Naive thymus-derived CD4-positive, alpha-beta T cell (primary cell): ENCODE measurements at regions of chr1 and their contacts with region 1.

Region 1: GRCh38 chr1:227787513-227788270 is 27.8 kb upstream of the PRSS38 start:
- DNase-seq: peak; percentile 76 to 94 (median 90)
- ATAC-seq: peak; percentile 96
- H3K4me3 ChIP-seq: peak overlapping the region; percentile 79
- H3K4me3 Mint-ChIP-seq: peak overlapping the region; percentile 81 to 89 (median 86)
- H3K27ac ChIP-seq: peak overlapping the region; percentile 23
- H3K27ac Mint-ChIP-seq: peak overlapping the region in 8 of 9 donors; percentile 23 to 84 (median 75)
- H3K4me1 ChIP-seq: peaks cover 5 to 6% of the 10 kb centered on the region in 2 donors
- H3K4me1 Mint-ChIP-seq: peaks cover 7 to 18% (median 11%) of the 10 kb centered on the region in 7 donors
- H3K27me3 ChIP-seq: no peaks in the 10 kb centered on the region
- H3K27me3 Mint-ChIP-seq: peaks cover 0 to 4% (median 0%) of the 10 kb centered on the region in 5 donors

Region 2: GRCh38 chr1:226009650-226010044 is 1778.0 kb before region 1 on chr1:
- CTCF ChIA-PET with region 1: no interaction called
- POLR2A ChIA-PET with region 1: no interaction called
- intact Hi-C with region 1: loop called in 1 of 2 experiments (anchors 5 kb)
- DNase-seq: no peak
- ATAC-seq: no peak
- H3K4me3 ChIP-seq: no peak overlapping the region
- H3K4me3 Mint-ChIP-seq: no peak overlapping the region
- H3K27ac ChIP-seq: no peak overlapping the region
- H3K27ac Mint-ChIP-seq: peak overlapping the region in 1 of 9 donors; percentile 23
- H3K4me1 ChIP-seq: peaks cover 0 to 2% of the 10 kb centered on the region in 2 donors
- H3K4me1 Mint-ChIP-seq: peaks cover 0 to 12% (median 3%) of the 10 kb centered on the region in 7 donors
- H3K27me3 ChIP-seq: no peaks in the 10 kb centered on the region
- H3K27me3 Mint-ChIP-seq: peaks cover 0 to 12% (median 0%) of the 10 kb centered on the region in 5 donors

Region 3: GRCh38 chr1:227728059-227728891 is 59.4 kb before region 1 on chr1:
- CTCF ChIA-PET with region 1: no interaction called
- POLR2A ChIA-PET with region 1: interaction called, 3 read pairs
- intact Hi-C with region 1: loop called (anchors 1 kb)
- DNase-seq: peak in 7 of 9 donors; percentile 23 to 63 (median 39)
- ATAC-seq: peak; percentile 69
- H3K4me3 ChIP-seq: peak overlapping the region; percentile 59
- H3K4me3 Mint-ChIP-seq: peak overlapping the region; percentile 78 to 89 (median 87)
- H3K27ac ChIP-seq: peak overlapping the region; percentile 69
- H3K27ac Mint-ChIP-seq: peak overlapping the region; percentile 43 to 90 (median 74)
- H3K4me1 ChIP-seq: peaks cover 0 to 10% of the 10 kb centered on the region in 2 donors
- H3K4me1 Mint-ChIP-seq: peaks cover 6 to 29% (median 20%) of the 10 kb centered on the region in 7 donors
- H3K27me3 ChIP-seq: no peaks in the 10 kb centered on the region
- H3K27me3 Mint-ChIP-seq: peaks cover 0 to 11% (median 8%) of the 10 kb centered on the region in 5 donors

Region 4: GRCh38 chr1:227828786-227829185 is 41.1 kb after region 1 on chr1:
- CTCF ChIA-PET with region 1: no interaction called
- POLR2A ChIA-PET with region 1: no interaction called
- intact Hi-C with region 1: no loop called
- DNase-seq: no peak
- ATAC-seq: no peak
- H3K4me3 ChIP-seq: no peak overlapping the region
- H3K4me3 Mint-ChIP-seq: no peak overlapping the region
- H3K27ac ChIP-seq: no peak overlapping the region
- H3K27ac Mint-ChIP-seq: no peak overlapping the region
- H3K4me1 ChIP-seq: peaks cover 0 to 12% of the 10 kb centered on the region in 2 donors
- H3K4me1 Mint-ChIP-seq: peaks cover 0 to 20% (median 9%) of the 10 kb centered on the region in 7 donors
- H3K27me3 ChIP-seq: no peaks in the 10 kb centered on the region
- H3K27me3 Mint-ChIP-seq: peaks cover 0 to 29% (median 6%) of the 10 kb centered on the region in 5 donors

Region 5: GRCh38 chr1:227946624-227947385 is 159.1 kb after region 1 on chr1:
- CTCF ChIA-PET with region 1: no interaction called
- POLR2A ChIA-PET with region 1: no interaction called
- intact Hi-C with region 1: loop called in 1 of 2 experiments (anchors 1 kb)
- DNase-seq: peak in 8 of 9 donors; percentile 24 to 70 (median 60)
- ATAC-seq: peak; percentile 63
- H3K4me3 ChIP-seq: peak overlapping the region; percentile 17
- H3K4me3 Mint-ChIP-seq: peak overlapping the region; percentile 65 to 87 (median 74)
- H3K27ac ChIP-seq: no peak overlapping the region
- H3K27ac Mint-ChIP-seq: peak overlapping the region in 1 of 9 donors; percentile 23
- H3K4me1 ChIP-seq: peaks cover 0 to 7% of the 10 kb centered on the region in 2 donors
- H3K4me1 Mint-ChIP-seq: peaks cover 5 to 12% (median 8%) of the 10 kb centered on the region in 7 donors
- H3K27me3 ChIP-seq: no peaks in the 10 kb centered on the region
- H3K27me3 Mint-ChIP-seq: peaks cover 8 to 34% (median 13%) of the 10 kb centered on the region in 5 donors

Region 6: GRCh38 chr1:228109073-228109961 is 321.6 kb after region 1 on chr1 and contains the start of gene MRPL55:
- CTCF ChIA-PET with region 1: no interaction called
- POLR2A ChIA-PET with region 1: no interaction called
- intact Hi-C with region 1: loop called (anchors 1 kb)
- DNase-seq: peak; percentile 97 to 100 (median 99)
- ATAC-seq: peak; percentile 99
- H3K4me3 ChIP-seq: peak within 1 kb of the TSS; percentile 100
- H3K4me3 Mint-ChIP-seq: peak within 1 kb of the TSS; percentile 87 to 95 (median 93)
- H3K27ac ChIP-seq: peak within 1 kb of the TSS; percentile 94
- H3K27ac Mint-ChIP-seq: peak within 1 kb of the TSS; percentile 88 to 98 (median 95)
- H3K4me1 ChIP-seq: peaks cover 9 to 16% of the 10 kb centered on the region in 2 donors
- H3K4me1 Mint-ChIP-seq: peaks cover 5 to 37% (median 26%) of the 10 kb centered on the region in 7 donors
- H3K27me3 ChIP-seq: no peaks in the 10 kb centered on the region
- H3K27me3 Mint-ChIP-seq: peaks cover 0 to 3% (median 0%) of the 10 kb centered on the region in 5 donors
- total RNA-seq, gene MRPL55: 34.3 to 79.3 (median 65.2) TPM

Region 7: GRCh38 chr1:228405987-228406265 is 618.2 kb after region 1 on chr1:
- CTCF ChIA-PET with region 1: no interaction called
- POLR2A ChIA-PET with region 1: no interaction called
- intact Hi-C with region 1: loop called in 1 of 2 experiments (anchors 5 kb)
- DNase-seq: no peak
- ATAC-seq: no peak
- H3K4me3 ChIP-seq: peak overlapping the region; percentile 74
- H3K4me3 Mint-ChIP-seq: peak overlapping the region; percentile 80 to 99 (median 94)
- H3K27ac ChIP-seq: peak overlapping the region; percentile 86
- H3K27ac Mint-ChIP-seq: peak overlapping the region; percentile 36 to 92 (median 80)
- H3K4me1 ChIP-seq: peaks cover 36 to 41% of the 10 kb centered on the region in 2 donors
- H3K4me1 Mint-ChIP-seq: peaks cover 46 to 77% (median 56%) of the 10 kb centered on the region in 7 donors
- H3K27me3 ChIP-seq: no peaks in the 10 kb centered on the region
- H3K27me3 Mint-ChIP-seq: no peaks in the 10 kb centered on the region